ENCODE measurements at regions of chr12 and their contacts with region 1.

Region 1: GRCh38 chr12:14995583-14996425 is 23.0 kb downstream of the PDE6H start:
- DNase-seq: no peak
- H3K4me3 Mint-ChIP-seq: no peak overlapping the region
- H3K27ac Mint-ChIP-seq: no peak overlapping the region
- H3K4me1 Mint-ChIP-seq: peaks cover 25% of the 10 kb centered on the region
- H3K27me3 Mint-ChIP-seq: no peaks in the 10 kb centered on the region

Region 2: DNA sequence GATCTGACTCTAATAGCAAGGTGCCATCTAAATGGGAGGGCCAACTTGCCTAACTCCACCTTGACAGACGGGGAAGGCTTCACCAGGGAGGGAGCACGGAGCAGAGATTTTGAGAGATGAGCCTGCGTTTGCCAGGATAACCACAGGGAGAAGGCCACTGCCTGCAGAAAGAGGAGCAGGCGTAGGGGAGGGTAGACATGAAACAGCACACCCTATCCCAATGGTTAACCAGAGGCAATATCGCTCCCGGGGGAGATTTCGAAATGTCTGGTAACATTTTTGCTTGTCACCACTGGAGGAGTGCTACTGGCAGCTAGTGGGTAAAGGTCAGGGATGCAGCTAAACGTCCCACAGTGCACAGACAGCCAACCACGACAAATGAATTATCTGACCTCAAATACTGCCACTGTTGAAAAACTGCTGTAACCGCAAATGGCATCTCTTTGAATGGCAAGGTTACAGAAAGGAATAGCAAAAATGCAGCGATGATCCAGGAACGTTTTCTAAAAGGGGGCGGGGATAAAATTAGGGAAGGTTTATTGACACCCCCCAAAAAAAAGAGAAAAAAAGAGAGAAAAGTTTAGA is 756.4 kb before region 1 on chr12:
- CTCF ChIA-PET with region 1: interaction called, 4 read pairs
- intact Hi-C with region 1: loop called (anchors 1 kb)
- DNase-seq: peak; percentile 60
- H3K4me3 Mint-ChIP-seq: peak overlapping the region; percentile 68
- H3K27ac Mint-ChIP-seq: peak overlapping the region; percentile 79
- H3K4me1 Mint-ChIP-seq: peaks cover 20% of the 10 kb centered on the region
- H3K27me3 Mint-ChIP-seq: no peaks in the 10 kb centered on the region

Region 3: DNA sequence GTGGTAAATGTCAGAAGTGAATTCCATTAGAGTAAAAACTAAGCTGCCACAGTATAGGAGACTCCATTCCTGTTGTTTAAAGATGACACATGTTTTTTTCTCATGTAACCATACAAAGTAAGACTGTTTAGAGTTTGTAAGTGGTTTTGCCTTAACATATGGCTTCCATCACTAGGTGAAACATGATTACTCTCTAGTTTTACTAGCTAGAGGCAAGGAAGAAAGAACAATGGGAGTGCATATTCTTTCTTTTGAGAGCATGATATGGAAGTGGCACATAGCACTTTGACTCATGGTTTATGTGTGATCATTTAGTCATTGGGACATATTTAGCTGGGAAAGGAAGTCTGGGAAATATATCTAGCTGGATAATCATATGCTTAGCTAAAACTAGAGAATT is 622.6 kb before region 1 on chr12:
- CTCF ChIA-PET with region 1: no interaction called
- intact Hi-C with region 1: no loop called
- DNase-seq: no peak
- H3K4me3 Mint-ChIP-seq: peak overlapping the region; percentile 41
- H3K27ac Mint-ChIP-seq: peak overlapping the region; percentile 89
- H3K4me1 Mint-ChIP-seq: peaks cover 59% of the 10 kb centered on the region
- H3K27me3 Mint-ChIP-seq: no peaks in the 10 kb centered on the region

Region 4: GRCh38 chr12:14769969-14770495 is 225.8 kb before region 1 on chr12:
- CTCF ChIA-PET with region 1: interaction called, 6 read pairs
- intact Hi-C with region 1: loop called (anchors 2 kb)
- DNase-seq: peak; percentile 89
- H3K4me3 Mint-ChIP-seq: peak overlapping the region; percentile 97
- H3K27ac Mint-ChIP-seq: peak overlapping the region; percentile 98
- H3K4me1 Mint-ChIP-seq: peaks cover 38% of the 10 kb centered on the region
- H3K27me3 Mint-ChIP-seq: no peaks in the 10 kb centered on the region

Region 5: GRCh38 chr12:14810953-14811483 is 184.8 kb before region 1 on chr12:
- CTCF ChIA-PET with region 1: interaction called, 7 read pairs
- intact Hi-C with region 1: loop called (anchors 1 kb)
- DNase-seq: peak; percentile 42
- H3K4me3 Mint-ChIP-seq: no peak overlapping the region
- H3K27ac Mint-ChIP-seq: no peak overlapping the region
- H3K4me1 Mint-ChIP-seq: peaks cover 13% of the 10 kb centered on the region
- H3K27me3 Mint-ChIP-seq: no peaks in the 10 kb centered on the region

Region 6: DNA sequence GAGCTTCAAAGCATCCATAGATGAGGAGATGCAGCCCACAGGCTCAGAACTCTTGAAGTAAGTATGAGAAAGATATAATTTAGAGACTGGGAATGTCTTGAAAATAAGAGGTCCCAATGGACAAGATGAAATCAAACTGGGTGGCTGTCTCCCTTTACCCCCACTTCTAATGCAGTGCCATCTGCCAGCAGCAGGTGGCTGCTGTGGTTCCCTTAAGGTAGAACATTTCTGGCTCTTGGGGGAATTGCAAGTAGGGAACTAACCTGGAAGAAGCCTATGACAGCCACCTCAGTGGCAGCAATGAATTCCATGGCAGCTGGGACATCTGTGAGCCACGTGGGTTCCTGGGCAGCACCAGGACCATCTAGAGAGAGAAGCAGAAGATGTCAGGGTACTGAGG is 58.1 kb before region 1 on chr12:
- CTCF ChIA-PET with region 1: interaction called, 22 read pairs
- intact Hi-C with region 1: loop called (anchors 1 kb)
- DNase-seq: peak; percentile 41
- H3K4me3 Mint-ChIP-seq: no peak overlapping the region
- H3K27ac Mint-ChIP-seq: no peak overlapping the region
- H3K4me1 Mint-ChIP-seq: peaks cover 43% of the 10 kb centered on the region
- H3K27me3 Mint-ChIP-seq: no peaks in the 10 kb centered on the region

Region 7: DNA sequence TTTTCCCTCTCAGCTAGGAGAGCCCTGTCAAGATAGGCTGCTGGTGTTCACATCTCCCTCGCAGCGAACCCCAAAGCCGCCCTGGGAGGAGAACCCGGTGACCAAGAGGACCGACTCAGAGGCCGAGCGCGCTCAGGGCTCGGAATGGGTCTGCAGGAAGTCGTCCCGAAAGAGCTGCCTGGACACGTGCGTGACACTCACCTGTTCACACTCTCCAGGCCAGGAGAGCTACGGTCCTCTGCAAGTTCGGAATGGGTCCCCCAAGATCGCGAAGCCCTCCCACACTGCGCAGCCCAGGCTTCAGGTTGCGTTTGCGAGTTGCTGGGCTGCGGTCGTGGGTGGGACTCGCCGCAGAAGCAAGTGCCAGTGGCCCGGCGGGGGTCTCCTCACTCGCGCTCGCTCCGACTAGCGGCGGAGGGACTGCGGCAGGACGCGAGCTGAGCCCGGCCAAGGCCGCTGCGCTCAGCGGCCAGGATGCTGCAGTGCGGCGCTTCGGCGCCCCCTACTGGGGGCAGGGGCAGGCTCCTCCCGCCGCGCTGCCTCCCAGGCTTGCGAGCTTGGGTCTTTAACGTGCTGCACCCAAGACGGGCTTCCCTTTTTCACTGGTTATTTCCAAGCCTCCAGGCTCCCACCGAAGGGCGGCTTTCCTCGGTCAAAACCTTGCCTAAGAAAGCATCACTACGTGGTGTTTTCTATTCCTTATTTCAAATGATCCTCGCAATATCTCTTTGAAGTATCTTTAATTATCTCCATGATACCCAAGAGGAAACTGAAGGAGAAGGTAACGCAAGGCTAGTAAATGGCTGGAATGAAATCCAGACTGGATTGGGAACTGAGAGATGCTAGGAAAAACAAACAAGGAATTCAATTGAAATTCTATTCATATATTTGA is 225.4 kb after region 1 on chr12 and contains the start of gene RERG:
- CTCF ChIA-PET with region 1: interaction called, 11 read pairs
- intact Hi-C with region 1: loop called (anchors 1 kb)
- DNase-seq: peak; percentile 76
- H3K4me3 Mint-ChIP-seq: peak within 1 kb of the TSS; percentile 62
- H3K27ac Mint-ChIP-seq: no peak within 1 kb of the TSS
- H3K4me1 Mint-ChIP-seq: peaks cover 3% of the 10 kb centered on the region
- H3K27me3 Mint-ChIP-seq: peaks cover 13% of the 10 kb centered on the region
- total RNA-seq, gene RERG: not detected

Region 8: DNA sequence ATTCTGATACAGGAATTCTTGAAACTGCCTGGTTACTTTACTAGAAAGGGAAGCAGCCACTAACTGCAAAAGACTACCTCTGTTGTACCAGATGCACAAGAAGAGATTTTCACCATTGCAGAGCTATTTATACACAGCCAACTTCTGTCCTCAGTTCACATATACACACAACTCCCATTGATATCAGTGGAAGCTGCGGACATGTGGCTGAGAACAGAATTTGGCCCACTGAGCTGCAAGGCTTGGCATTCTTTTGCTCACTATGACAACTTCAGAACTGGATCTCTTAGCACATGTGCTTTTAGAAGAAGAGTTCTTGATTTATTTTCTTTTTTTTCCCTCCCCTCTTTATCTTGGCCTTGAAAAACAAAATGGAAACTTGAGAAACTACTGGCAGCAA is 354.8 kb after region 1 on chr12:
- CTCF ChIA-PET with region 1: no interaction called
- intact Hi-C with region 1: no loop called
- DNase-seq: no peak
- H3K4me3 Mint-ChIP-seq: no peak overlapping the region
- H3K27ac Mint-ChIP-seq: no peak overlapping the region
- H3K4me1 Mint-ChIP-seq: no peaks in the 10 kb centered on the region
- H3K27me3 Mint-ChIP-seq: peaks cover 4% of the 10 kb centered on the region

Region 9: GRCh38 chr12:15497671-15498292 is 502.0 kb after region 1 on chr12:
- CTCF ChIA-PET with region 1: no interaction called
- intact Hi-C with region 1: no loop called
- DNase-seq: no peak
- H3K4me3 Mint-ChIP-seq: no peak overlapping the region
- H3K27ac Mint-ChIP-seq: no peak overlapping the region
- H3K4me1 Mint-ChIP-seq: no peaks in the 10 kb centered on the region
- H3K27me3 Mint-ChIP-seq: peaks cover 8% of the 10 kb centered on the region

Region 10: GRCh38 chr12:15532364-15532977 is 536.7 kb after region 1 on chr12:
- CTCF ChIA-PET with region 1: no interaction called
- intact Hi-C with region 1: loop called (anchors 5 kb)
- DNase-seq: peak; percentile 72
- H3K4me3 Mint-ChIP-seq: no peak overlapping the region
- H3K27ac Mint-ChIP-seq: no peak overlapping the region
- H3K4me1 Mint-ChIP-seq: peaks cover 18% of the 10 kb centered on the region
- H3K27me3 Mint-ChIP-seq: no peaks in the 10 kb centered on the region